CD4-positive, alpha-beta memory T cell (primary cell): ENCODE measurements at regions of chr17 and their contacts with region 1.

Region 1: GRCh38 chr17:29579866-29580771 is 9.3 kb downstream of the GIT1 start:
- DNase-seq: peak; percentile 85 to 91 (median 87)
- H3K4me3 ChIP-seq: no peak overlapping the region
- H3K4me3 Mint-ChIP-seq: peak overlapping the region in 2 of 8 donors; percentile 8 to 65
- H3K27ac ChIP-seq: no peak overlapping the region
- H3K27ac Mint-ChIP-seq: peak overlapping the region; percentile 55 to 90 (median 83)
- H3K4me1 ChIP-seq: peaks cover 18% of the 10 kb centered on the region
- H3K4me1 Mint-ChIP-seq: peaks cover 8 to 31% (median 18%) of the 10 kb centered on the region in 4 donors
- H3K27me3 ChIP-seq: no peaks in the 10 kb centered on the region
- H3K27me3 Mint-ChIP-seq: no peaks in the 10 kb centered on the region

Region 2: DNA sequence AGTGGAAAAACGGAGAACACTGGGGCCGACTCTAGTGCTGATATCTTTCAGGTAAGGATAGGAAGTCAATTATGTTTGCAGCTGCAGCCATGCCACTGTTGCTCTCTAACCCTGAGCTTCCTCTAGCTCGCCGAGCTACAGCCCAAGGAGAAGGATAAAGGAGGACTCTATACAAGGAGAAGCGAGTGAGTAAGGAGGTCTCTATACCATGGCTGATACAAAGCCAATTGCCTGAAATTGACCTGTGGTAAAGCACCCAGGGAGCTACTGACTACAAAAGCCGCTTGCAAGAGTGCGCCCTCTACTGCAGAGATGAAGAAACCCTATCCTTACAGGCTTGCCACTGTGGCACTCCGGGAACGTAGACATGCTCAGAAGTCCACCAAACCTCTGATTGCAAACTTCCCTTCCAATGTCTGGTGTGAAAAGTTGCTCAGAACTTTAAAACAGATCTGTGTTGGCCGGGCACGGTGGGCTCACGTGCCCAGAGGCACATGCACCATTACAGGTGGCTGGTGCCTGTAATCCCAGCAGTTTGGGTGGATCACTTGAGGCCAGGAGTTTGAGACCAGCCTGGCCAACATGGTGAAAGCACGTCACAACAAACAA is 1163.3 kb before region 1 on chr17:
- CTCF ChIA-PET with region 1: no interaction called
- POLR2A ChIA-PET with region 1: no interaction called
- intact Hi-C with region 1: no loop called
- DNase-seq: peak; percentile 37 to 58 (median 45)
- H3K4me3 ChIP-seq: no peak overlapping the region
- H3K4me3 Mint-ChIP-seq: no peak overlapping the region
- H3K27ac ChIP-seq: no peak overlapping the region
- H3K27ac Mint-ChIP-seq: peak overlapping the region in 1 of 7 donors; percentile 62
- H3K4me1 ChIP-seq: no peaks in the 10 kb centered on the region
- H3K4me1 Mint-ChIP-seq: peaks cover 4 to 7% (median 5%) of the 10 kb centered on the region in 4 donors
- H3K27me3 ChIP-seq: no peaks in the 10 kb centered on the region
- H3K27me3 Mint-ChIP-seq: peaks cover 5 to 19% of the 10 kb centered on the region in 2 donors

Region 3: GRCh38 chr17:30000001-30000754 is 420.1 kb after region 1 on chr17:
- CTCF ChIA-PET with region 1: no interaction called
- POLR2A ChIA-PET with region 1: no interaction called
- intact Hi-C with region 1: loop called (anchors 2 kb)
- DNase-seq: peak in 2 of 5 donors; percentile 1 to 2
- H3K4me3 ChIP-seq: no peak overlapping the region
- H3K4me3 Mint-ChIP-seq: peak overlapping the region; percentile 9 to 76 (median 64)
- H3K27ac ChIP-seq: no peak overlapping the region
- H3K27ac Mint-ChIP-seq: peak overlapping the region in 5 of 7 donors; percentile 9 to 92 (median 58)
- H3K4me1 ChIP-seq: peaks cover 5% of the 10 kb centered on the region
- H3K4me1 Mint-ChIP-seq: peaks cover 5 to 11% (median 9%) of the 10 kb centered on the region in 4 donors
- H3K27me3 ChIP-seq: no peaks in the 10 kb centered on the region
- H3K27me3 Mint-ChIP-seq: no peaks in the 10 kb centered on the region